ENCODE measurements at regions of chr6 and their contacts with region 1.

Region 1: DNA sequence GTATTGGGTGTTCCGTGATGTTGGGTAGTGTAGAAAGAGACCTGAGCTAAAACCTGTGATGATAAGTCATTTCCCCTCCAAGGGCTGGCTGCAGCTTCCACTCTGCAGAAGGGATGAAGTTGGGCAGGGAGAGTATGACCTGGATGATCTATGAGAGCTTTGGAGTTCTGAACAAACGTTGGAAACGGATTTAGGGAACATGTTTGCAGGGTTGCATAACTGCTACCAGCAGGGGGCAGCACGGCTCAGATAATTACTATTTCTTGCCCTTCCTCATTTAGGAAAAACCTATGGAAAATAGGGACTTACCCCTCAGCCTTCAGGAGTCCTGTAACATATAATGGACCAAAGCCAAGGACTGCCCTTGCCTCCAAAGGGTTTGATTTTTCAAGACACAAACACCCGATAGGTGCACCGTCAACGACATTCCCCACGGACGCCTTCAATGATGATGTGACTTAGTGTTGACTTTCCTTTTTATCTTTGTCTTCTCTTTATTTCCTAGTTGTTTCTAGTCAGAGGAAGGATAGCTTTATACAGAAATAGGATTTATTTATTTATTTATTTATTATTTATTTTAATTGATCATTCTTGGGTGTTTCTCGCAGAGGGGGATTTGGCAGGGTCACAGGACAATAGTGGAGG is 164.9 kb upstream of the SASH1 start:
- ATAC-seq: no peak
- H3K4me3 ChIP-seq: no peak overlapping the region
- H3K27ac ChIP-seq: no peak overlapping the region
- H3K4me1 ChIP-seq: peaks cover 6 to 12% of the 10 kb centered on the region in 2 donors

Region 2: DNA sequence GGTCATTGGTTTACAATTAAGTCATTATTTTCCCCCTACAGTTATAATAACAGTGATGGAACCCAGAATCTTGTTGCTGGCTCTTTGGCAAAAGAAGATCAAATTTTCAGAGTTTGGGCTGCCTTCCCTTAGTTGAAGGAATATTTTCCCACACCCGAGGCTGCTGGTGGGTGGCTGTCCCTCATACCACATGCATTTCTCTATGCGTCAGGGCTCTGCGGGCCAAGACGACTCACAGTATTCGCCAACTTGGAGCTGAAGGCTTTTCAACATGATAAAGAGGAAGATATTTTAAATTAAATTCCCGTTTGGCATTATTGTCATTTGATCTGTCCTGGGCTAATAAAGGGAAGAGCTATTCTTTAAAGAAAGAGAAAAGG is 62.7 kb after region 1 on chr6:
- in situ Hi-C with region 1: loop called in 1 of 9 experiments (anchors 10 kb)
- ATAC-seq: peak in 2 of 8 experiments; percentile 12 to 42
- H3K4me3 ChIP-seq: no peak overlapping the region
- H3K27ac ChIP-seq: no peak overlapping the region
- H3K4me1 ChIP-seq: peaks cover 10 to 11% of the 10 kb centered on the region in 2 donors

Region 3: DNA sequence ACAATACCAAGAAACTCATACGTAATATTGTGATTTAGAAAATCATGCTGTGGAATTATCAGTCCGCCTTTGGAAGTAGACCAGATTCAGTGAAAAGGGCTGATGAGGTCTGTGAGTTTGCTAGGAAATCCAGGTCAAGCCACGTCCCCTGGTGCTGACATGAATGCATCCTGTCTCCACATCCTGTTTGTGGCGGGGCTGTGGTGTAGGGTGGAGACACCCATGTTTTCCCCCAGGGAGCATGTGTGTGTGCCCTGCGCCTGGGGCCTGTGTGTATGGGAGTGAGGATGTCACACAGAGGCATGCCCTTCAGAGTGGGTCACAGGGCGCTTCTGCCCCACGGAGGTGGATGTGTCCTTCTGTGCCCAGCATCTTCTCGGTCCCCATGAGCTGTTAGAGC is 274.0 kb after region 1 on chr6:
- in situ Hi-C with region 1: loop called in 3 of 9 experiments (anchors 10 to 25 kb)
- ATAC-seq: peak in 1 of 8 experiments; percentile 38
- H3K4me3 ChIP-seq: no peak overlapping the region
- H3K27ac ChIP-seq: no peak overlapping the region
- H3K4me1 ChIP-seq: peaks cover 8 to 33% of the 10 kb centered on the region in 2 donors

Region 4: DNA sequence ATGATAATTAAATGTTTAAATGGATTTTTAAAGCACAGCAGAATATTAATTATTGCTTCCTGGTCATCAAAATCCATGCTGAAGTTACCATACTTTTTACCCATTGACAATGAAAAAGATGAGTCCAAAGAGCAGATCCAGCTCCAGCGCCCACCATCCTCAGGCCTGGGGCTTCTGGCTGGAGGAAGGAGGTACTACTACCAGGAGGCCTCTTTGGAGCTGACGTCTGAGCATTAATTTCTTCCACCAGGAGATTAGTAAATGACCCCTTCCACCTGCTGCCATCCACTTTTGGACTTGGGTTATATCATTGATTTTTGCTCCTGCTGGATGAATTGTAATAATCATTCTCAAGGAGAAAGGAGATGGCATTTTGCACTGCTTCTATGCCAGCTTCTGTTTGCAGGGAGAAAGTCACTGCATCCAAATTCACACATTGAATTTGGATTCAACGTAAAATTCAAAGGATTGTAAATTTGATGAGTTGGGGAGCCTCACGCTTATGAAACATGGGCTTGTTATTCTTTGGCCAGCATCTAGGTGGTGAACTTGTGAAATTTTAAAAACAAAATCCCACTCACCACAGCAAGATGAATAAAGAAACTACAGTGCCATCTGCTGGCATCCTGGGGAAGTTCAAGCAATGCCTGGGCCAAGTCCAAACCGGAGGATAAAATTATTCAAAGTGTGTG is 286.8 kb after region 1 on chr6:
- in situ Hi-C with region 1: loop called in 3 of 9 experiments (anchors 10 to 25 kb)
- ATAC-seq: peak; percentile 72 to 88 (median 76)
- H3K4me3 ChIP-seq: no peak overlapping the region
- H3K27ac ChIP-seq: no peak overlapping the region
- H3K4me1 ChIP-seq: peaks cover 5 to 10% of the 10 kb centered on the region in 2 donors